ENCODE measurements at regions of chrX and their contacts with region 1.

Region 1: DNA sequence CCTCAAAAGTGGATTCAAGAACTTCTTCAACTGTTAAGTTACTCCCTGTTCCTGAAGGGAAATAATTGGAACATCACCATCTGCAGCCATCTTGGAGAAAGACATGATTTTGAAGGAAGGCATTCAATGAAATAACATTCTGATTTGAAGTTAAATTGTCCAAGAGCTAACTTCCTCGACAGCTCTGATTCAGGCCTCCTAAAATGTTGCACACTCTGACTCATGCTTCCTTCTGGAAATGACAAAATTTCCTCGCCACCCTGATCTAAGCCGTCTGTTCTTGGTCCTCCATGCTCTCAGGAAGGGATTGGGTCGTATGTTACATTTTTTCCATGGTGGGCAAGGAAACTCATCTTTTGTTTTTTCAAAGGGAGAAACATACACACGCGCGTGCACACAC is 496.9 kb upstream of the DIPK2B start:
- DNase-seq: no peak
- ATAC-seq: no peak
- H3K4me3 Mint-ChIP-seq: no peak overlapping the region
- H3K27ac Mint-ChIP-seq: no peak overlapping the region
- H3K4me1 Mint-ChIP-seq: no peaks in the 10 kb centered on the region
- H3K27me3 Mint-ChIP-seq: peaks cover 2% of the 10 kb centered on the region
- CTCF ChIP-seq: no peak

Region 2: DNA sequence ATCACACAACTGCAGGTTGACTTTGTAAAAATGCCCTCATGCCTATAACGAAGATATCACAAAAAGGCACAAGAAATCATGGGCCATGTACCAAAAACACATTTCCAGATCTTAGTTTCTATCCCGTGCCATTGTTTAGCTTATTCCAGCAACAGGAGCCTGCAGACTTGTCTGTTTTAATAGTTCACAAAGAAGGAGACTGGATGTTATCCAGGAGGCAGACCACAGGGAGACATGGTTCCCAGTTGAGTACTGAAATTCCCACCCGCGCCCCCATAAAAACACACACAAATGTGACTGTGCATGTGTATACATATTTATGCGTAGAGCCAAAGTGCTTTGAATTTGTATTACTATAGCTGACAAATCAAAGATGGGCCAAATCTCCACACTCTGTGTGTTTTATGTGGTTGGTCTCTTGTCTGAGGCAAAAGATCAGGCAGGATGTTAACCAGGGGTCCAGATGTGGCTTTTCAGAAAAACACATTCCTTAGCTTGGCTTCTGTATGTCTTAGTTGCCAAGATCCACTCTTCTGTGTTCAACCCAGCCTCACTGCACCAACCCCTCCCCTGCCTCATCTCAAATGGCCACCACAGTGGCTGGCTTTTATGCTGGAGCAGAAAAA is 27.8 kb before region 1 on chrX:
- CTCF ChIA-PET with region 1: no interaction called
- POLR2A ChIA-PET with region 1: no interaction called
- intact Hi-C with region 1: loop called (anchors 1 kb)
- DNase-seq: no peak
- ATAC-seq: no peak
- H3K4me3 Mint-ChIP-seq: no peak overlapping the region
- H3K27ac Mint-ChIP-seq: no peak overlapping the region
- H3K4me1 Mint-ChIP-seq: no peaks in the 10 kb centered on the region
- H3K27me3 Mint-ChIP-seq: no peaks in the 10 kb centered on the region
- CTCF ChIP-seq: no peak

Region 3: GRCh38 chrX:45952030-45952429 is 254.4 kb after region 1 on chrX:
- CTCF ChIA-PET with region 1: no interaction called
- POLR2A ChIA-PET with region 1: no interaction called
- intact Hi-C with region 1: no loop called
- DNase-seq: no peak
- ATAC-seq: no peak
- H3K4me3 Mint-ChIP-seq: no peak overlapping the region
- H3K27ac Mint-ChIP-seq: no peak overlapping the region
- H3K4me1 Mint-ChIP-seq: no peaks in the 10 kb centered on the region
- H3K27me3 Mint-ChIP-seq: no peaks in the 10 kb centered on the region
- CTCF ChIP-seq: no peak

Measured in activated B cell treated with CpG ODN at 0.5 μM for 24 hours (primary cell).